A673 (cell line): ENCODE measurements at regions of chr7 and their contacts with region 1.

Region 1: GRCh38 chr7:28926871-28927597 is 31.1 kb downstream of the TRIL start:
- DNase-seq: peak; percentile 96
- H3K4me3 ChIP-seq: peak overlapping the region; percentile 54
- H3K27ac ChIP-seq: peak overlapping the region; percentile 64
- H3K4me1 ChIP-seq: peaks cover 34% of the 10 kb centered on the region
- H3K27me3 ChIP-seq: no peaks in the 10 kb centered on the region
- CTCF ChIP-seq: peak; percentile 88

Region 2: DNA sequence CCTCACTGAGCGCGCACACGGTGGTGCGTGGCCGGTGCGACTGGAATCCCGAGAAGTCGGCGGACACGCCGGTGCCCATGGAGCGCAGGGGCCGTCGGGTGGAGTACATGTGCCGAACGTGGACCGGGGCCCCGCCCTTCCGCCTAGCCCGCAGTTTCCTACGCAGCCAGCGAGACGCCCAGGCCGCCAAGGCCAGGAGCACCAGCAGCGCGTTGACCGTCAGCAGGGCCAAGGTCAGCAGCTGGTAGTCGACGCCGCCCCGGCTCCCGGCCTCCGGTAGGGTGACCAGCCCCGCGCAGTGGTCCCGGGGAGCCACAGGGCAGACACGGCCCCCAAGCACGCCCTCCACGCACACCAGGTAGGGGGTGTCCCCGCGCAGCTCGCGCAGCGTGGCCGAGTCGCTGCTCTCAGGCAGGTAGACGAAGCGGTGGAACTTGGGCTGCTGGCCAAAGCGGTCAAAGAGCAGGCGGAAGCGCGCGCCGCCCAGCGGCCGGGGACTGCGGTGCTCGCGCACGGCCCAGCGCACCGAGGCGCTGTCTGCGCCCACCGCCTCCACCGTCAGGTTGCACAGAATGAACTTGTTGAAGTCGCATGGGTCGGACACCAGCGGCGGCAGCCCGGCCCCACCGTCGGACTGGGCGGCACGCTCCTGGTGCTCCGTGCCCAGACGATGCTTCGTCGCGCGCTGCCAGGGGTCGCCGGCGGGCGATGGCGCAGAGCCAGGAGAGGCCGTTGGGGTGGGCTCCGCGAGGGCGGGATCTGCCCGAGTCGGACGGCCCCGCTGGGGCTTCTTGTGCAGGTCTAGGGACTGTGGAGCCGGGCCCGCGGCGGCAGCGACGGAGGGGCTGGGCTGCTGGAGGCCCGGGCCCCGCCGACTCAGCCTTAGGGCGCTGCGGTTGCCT is 28.9 kb after region 1 on chr7:
- CTCF ChIA-PET with region 1: interaction called, 26 read pairs
- POLR2A ChIA-PET with region 1: no interaction called
- intact Hi-C with region 1: loop called (anchors 2 kb)
- DNase-seq: peak; percentile 78
- H3K4me3 ChIP-seq: peak overlapping the region; percentile 71
- H3K27ac ChIP-seq: no peak overlapping the region
- H3K4me1 ChIP-seq: peaks cover 50% of the 10 kb centered on the region
- H3K27me3 ChIP-seq: peaks cover 5% of the 10 kb centered on the region
- CTCF ChIP-seq: peak; percentile 71

Region 3: DNA sequence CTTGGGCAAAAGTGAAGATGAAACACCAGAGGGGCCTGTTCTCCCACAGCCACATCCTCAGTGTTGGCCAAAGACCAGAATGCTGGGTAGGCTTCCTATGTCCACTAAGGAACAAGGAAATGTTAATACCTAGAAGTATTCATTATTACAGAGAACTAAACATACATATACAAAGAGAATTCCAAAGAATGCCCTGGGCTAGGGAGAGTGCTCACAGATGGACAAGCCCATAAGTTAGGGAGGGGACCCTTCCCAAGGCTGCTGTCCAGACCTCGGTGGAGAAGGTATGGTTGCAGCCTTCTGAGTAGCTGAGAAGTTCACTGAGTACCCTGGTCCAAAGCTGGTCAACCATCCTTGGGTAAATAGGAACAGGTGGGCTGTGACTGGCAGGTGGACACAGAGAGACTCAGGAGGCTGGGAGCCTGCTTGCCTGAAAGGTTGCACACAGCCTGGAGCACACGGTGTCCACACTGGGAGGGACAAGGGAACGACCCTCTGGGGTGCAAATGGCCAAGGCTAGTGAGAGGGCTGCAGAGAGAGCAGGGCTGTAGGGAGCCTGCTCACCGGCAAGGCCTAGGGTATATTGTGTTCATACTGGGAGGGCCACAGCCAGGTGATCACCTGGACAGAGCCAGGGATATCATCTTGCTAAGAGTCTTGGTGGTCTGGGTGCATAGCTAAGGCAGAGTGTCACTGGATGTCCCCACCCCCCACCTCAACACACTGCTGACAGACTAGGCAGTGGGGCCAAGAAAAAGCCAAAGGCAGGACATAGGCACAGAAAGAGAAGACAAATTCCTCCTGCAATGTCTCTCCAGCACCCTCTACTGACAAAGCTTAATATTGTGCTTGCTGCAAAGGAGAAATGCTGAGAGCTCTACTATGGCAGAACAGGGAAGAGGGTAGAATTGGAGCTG is 179.0 kb after region 1 on chr7:
- CTCF ChIA-PET with region 1: interaction called, 51 read pairs
- POLR2A ChIA-PET with region 1: no interaction called
- intact Hi-C with region 1: loop called (anchors 1 kb)
- DNase-seq: peak; percentile 82
- H3K4me3 ChIP-seq: no peak overlapping the region
- H3K27ac ChIP-seq: no peak overlapping the region
- H3K4me1 ChIP-seq: no peaks in the 10 kb centered on the region
- H3K27me3 ChIP-seq: no peaks in the 10 kb centered on the region
- CTCF ChIP-seq: peak; percentile 87

Region 4: DNA sequence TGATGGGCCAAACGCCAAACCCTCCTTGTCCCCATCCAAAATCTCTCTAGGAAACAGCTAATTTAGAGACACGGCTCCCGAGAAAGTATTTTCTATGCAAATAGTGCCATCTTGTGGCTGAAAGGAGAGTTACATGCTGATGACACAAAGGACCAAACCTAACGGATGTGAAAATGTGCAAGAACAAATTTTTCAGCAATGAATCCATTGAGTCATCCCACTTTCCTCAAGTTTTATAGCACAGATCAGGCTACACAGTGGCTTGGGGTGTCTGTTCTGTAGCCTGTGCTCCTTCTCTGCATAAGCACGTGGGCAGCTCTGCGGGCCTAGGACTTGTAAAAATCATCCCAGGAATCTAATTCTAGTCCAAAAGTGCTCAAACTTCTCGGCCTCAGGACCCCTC is 481.8 kb after region 1 on chr7:
- CTCF ChIA-PET with region 1: interaction called, 19 read pairs
- POLR2A ChIA-PET with region 1: interaction called, 3 read pairs
- intact Hi-C with region 1: loop called (anchors 1 kb)
- DNase-seq: peak; percentile 95
- H3K4me3 ChIP-seq: no peak overlapping the region
- H3K27ac ChIP-seq: peak overlapping the region; percentile 60
- H3K4me1 ChIP-seq: peaks cover 35% of the 10 kb centered on the region
- H3K27me3 ChIP-seq: no peaks in the 10 kb centered on the region
- CTCF ChIP-seq: peak; percentile 84

Region 5: GRCh38 chr7:29921404-29922010 is 994.5 kb after region 1 on chr7:
- CTCF ChIA-PET with region 1: interaction called, 3 read pairs
- POLR2A ChIA-PET with region 1: no interaction called
- intact Hi-C with region 1: loop called (anchors 10 kb)
- DNase-seq: peak; percentile 81
- H3K4me3 ChIP-seq: no peak overlapping the region
- H3K27ac ChIP-seq: no peak overlapping the region
- H3K4me1 ChIP-seq: peaks cover 4% of the 10 kb centered on the region
- H3K27me3 ChIP-seq: no peaks in the 10 kb centered on the region
- CTCF ChIP-seq: peak; percentile 95

Region 6: DNA sequence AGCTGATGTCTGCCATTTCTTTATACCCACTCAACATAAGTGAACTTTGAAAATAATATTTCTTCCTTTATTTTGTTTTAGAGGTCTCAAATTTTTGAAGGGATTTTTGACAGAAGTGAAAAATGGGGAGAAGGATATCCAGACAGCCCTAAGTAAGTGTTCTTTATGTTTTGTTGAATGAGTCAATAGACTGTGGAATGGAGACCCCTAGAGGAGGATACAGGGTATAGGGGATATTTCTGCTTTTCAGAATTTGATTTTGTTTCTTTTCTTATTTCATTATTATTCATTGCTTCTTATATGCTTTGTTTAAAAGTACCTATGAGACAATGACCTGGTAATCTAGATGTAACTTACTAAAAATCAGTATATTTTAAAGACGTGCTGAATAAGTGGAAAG is 1135.6 kb after region 1 on chr7:
- CTCF ChIA-PET with region 1: interaction called, 7 read pairs
- POLR2A ChIA-PET with region 1: interaction called, 7 read pairs
- intact Hi-C with region 1: loop called (anchors 10 kb)
- DNase-seq: peak; percentile 51
- H3K4me3 ChIP-seq: no peak overlapping the region
- H3K27ac ChIP-seq: no peak overlapping the region
- H3K4me1 ChIP-seq: no peaks in the 10 kb centered on the region
- H3K27me3 ChIP-seq: no peaks in the 10 kb centered on the region
- CTCF ChIP-seq: peak; percentile 74